Naive thymus-derived CD4-positive, alpha-beta T cell (primary cell): ENCODE measurements at regions of chr2 and their contacts with region 1.

Region 1: DNA sequence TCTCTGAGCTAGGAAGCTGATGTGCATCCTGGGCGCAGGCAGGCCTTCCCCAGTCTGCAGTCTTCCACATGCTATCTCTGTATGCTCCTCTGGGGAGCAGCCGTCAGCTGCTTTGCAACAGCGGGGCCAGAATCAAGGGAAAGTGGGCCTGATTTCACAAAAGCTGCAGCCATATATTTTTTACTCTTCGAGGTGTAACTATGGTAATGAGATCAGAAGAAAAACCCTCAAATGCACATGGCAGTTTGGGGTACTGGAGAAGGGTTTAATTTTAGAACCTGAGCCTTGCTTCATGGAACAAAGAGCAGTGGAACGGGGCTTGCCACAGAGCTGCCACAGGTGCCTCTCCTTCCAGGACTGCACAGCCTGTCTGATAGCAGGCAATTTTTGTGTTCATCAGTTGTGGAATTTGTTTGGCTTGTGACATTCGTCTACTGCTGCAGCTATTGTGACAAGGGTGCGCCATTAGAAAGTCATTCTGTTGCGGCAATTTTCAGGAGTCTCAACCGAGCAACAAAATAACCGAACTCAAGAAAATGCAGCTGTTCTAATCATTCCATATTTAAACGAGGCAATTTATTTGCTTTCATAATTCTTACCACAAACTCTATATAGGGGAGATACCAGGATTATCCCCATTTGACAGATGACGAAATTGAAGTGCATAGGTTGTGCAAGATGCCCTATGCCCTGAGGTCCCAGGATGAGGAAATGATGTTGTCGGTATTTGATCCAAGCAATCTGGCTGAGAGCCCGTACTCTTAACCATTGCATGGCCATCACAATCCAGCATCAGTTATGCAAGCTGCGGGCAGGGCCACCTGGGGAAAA is 109.6 kb upstream of the CYRIA start:
- DNase-seq: no peak
- ATAC-seq: no peak
- H3K4me3 ChIP-seq: no peak overlapping the region
- H3K4me3 Mint-ChIP-seq: no peak overlapping the region
- H3K27ac ChIP-seq: no peak overlapping the region
- H3K27ac Mint-ChIP-seq: no peak overlapping the region
- H3K4me1 ChIP-seq: no peaks in the 10 kb centered on the region
- H3K4me1 Mint-ChIP-seq: peaks cover 0 to 2% (median 0%) of the 10 kb centered on the region in 7 donors
- H3K27me3 ChIP-seq: no peaks in the 10 kb centered on the region
- H3K27me3 Mint-ChIP-seq: peaks cover 5 to 38% (median 13%) of the 10 kb centered on the region in 5 donors

Region 2: DNA sequence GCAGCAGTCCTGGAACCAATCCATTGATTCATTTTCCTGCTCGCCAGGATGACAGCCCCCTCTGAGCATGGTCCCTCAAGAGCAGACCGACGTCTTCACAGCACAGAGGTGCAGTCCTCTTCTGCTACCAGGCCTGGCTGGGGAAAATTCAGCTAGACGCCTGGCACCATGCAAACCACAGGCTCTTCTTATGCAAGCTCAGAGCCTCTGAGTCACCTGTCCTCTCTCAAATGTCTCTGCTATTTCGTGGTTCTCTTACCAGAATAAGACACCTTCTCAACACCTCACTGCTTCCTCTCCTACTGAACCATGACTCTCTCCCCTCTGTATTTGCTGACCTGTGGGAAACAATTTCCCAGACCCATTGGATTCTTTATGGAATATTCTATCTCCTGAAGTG is 29.8 kb before region 1 on chr2:
- CTCF ChIA-PET with region 1: no interaction called
- POLR2A ChIA-PET with region 1: no interaction called
- intact Hi-C with region 1: no loop called
- DNase-seq: no peak
- ATAC-seq: no peak
- H3K4me3 ChIP-seq: no peak overlapping the region
- H3K4me3 Mint-ChIP-seq: no peak overlapping the region
- H3K27ac ChIP-seq: no peak overlapping the region
- H3K27ac Mint-ChIP-seq: no peak overlapping the region
- H3K4me1 ChIP-seq: no peaks in the 10 kb centered on the region
- H3K4me1 Mint-ChIP-seq: peaks cover 0 to 17% (median 0%) of the 10 kb centered on the region in 7 donors
- H3K27me3 ChIP-seq: no peaks in the 10 kb centered on the region
- H3K27me3 Mint-ChIP-seq: peaks cover 3 to 32% (median 8%) of the 10 kb centered on the region in 5 donors

Region 3: DNA sequence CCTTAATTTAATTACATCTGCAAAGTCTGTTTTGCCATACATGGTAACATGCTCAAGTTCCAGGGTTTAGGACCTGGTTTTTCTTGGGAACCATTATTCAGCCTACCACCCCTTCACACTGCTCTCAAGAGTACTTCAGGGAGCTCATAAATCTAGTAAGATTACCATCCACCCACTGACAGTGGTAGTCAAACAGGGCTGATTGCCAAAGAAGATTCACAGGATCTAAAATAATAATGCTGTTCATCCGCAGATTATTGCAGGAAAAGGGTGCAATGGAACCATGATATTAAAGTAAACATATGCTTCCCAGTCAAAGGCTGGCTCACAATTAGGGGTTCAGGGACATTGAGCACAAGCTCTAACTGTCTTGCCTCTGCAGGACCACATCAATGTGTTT is 38.3 kb after region 1 on chr2:
- CTCF ChIA-PET with region 1: no interaction called
- POLR2A ChIA-PET with region 1: no interaction called
- intact Hi-C with region 1: loop called in 1 of 2 experiments (anchors 1 kb)
- DNase-seq: no peak
- ATAC-seq: no peak
- H3K4me3 ChIP-seq: no peak overlapping the region
- H3K4me3 Mint-ChIP-seq: no peak overlapping the region
- H3K27ac ChIP-seq: no peak overlapping the region
- H3K27ac Mint-ChIP-seq: no peak overlapping the region
- H3K4me1 ChIP-seq: no peaks in the 10 kb centered on the region
- H3K4me1 Mint-ChIP-seq: peaks cover 0 to 1% (median 0%) of the 10 kb centered on the region in 7 donors
- H3K27me3 ChIP-seq: no peaks in the 10 kb centered on the region
- H3K27me3 Mint-ChIP-seq: no peaks in the 10 kb centered on the region